Panc1 (cell line): ENCODE measurements at regions of chr1 and their contacts with region 1.

Region 1: GRCh38 chr1:110209715-110210603 is at the start of gene KCNC4:
- DNase-seq: no peak
- ATAC-seq: peak; percentile 93
- H3K4me3 ChIP-seq: peak within 1 kb of the TSS; percentile 53 to 58
- H3K27ac ChIP-seq: peak within 1 kb of the TSS; percentile 83
- H3K4me1 ChIP-seq: peaks cover 19% of the 10 kb centered on the region
- H3K27me3 ChIP-seq: no peaks in the 10 kb centered on the region
- CTCF ChIP-seq: no peak
- total RNA-seq, gene KCNC4: 15.4 TPM

Region 2: GRCh38 chr1:110312188-110313121 is 102.5 kb after region 1 on chr1:
- CTCF ChIA-PET with region 1: interaction called, 77 read pairs
- POLR2A ChIA-PET with region 1: no interaction called
- in situ Hi-C with region 1: no loop called
- intact Hi-C with region 1: loop called (anchors 1 kb)
- DNase-seq: peak; percentile 51
- ATAC-seq: peak; percentile 97
- H3K4me3 ChIP-seq: no peak overlapping the region
- H3K27ac ChIP-seq: peak overlapping the region; percentile 48; the same call in 1 of the 2 replicates
- H3K4me1 ChIP-seq: no peaks in the 10 kb centered on the region
- H3K27me3 ChIP-seq: no peaks in the 10 kb centered on the region
- CTCF ChIP-seq: peak; percentile 83

Region 3: DNA sequence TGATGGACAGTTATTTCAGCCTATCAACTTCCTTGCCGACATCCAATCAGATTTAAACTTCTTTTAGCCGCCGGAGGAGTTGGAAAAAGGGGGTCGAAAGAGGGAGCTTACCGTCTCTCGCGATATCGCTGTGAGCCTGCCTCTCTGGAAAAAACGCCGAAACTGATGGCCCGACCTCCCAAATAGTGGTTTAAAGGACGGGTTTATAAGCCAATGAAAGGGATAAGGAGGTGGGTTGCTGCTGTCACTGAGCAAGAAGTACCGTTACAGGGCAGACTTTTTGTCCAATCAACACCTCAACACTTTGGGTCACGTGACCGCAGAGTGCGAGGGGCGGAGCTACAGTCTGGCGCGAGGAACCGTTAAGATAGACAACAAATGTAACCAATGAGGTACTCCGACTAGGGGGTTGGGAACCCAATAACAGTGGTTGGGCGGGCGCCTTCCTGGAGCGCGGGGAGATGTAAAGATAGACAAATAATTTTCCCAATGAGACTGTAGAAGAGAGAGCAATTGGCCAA is 129.0 kb after region 1 on chr1 and contains the start of gene RBM15:
- CTCF ChIA-PET with region 1: interaction called, 10 read pairs
- POLR2A ChIA-PET with region 1: no interaction called
- in situ Hi-C with region 1: no loop called
- intact Hi-C with region 1: no loop called
- DNase-seq: peak; percentile 100
- ATAC-seq: peak; percentile 85
- H3K4me3 ChIP-seq: peak within 1 kb of the TSS; percentile 88 to 92
- H3K27ac ChIP-seq: peak within 1 kb of the TSS; percentile 99
- H3K4me1 ChIP-seq: peaks cover 30% of the 10 kb centered on the region
- H3K27me3 ChIP-seq: no peaks in the 10 kb centered on the region
- CTCF ChIP-seq: no peak
- total RNA-seq, gene RBM15: 32.1 TPM

Region 4: GRCh38 chr1:110495926-110496600 is 286.1 kb after region 1 on chr1:
- CTCF ChIA-PET with region 1: interaction called, 12 read pairs
- POLR2A ChIA-PET with region 1: no interaction called
- in situ Hi-C with region 1: no loop called
- intact Hi-C with region 1: no loop called
- DNase-seq: peak; percentile 43
- ATAC-seq: peak; percentile 89
- H3K4me3 ChIP-seq: no peak overlapping the region
- H3K27ac ChIP-seq: no peak overlapping the region
- H3K4me1 ChIP-seq: no peaks in the 10 kb centered on the region
- H3K27me3 ChIP-seq: no peaks in the 10 kb centered on the region
- CTCF ChIP-seq: peak; percentile 92